ENCODE measurements at regions of chr21 and their contacts with region 1.

Region 1: GRCh38 chr21:28522014-28522799 is 470.5 kb downstream of the LTN1 start:
- DNase-seq: peak; percentile 79
- ATAC-seq: peak; percentile 90
- H3K4me3 ChIP-seq: no peak overlapping the region
- H3K27ac ChIP-seq: peak overlapping the region; percentile 54; the same call in 1 of the 2 replicates
- H3K4me1 ChIP-seq: peaks cover 2% of the 10 kb centered on the region
- H3K27me3 ChIP-seq: no peaks in the 10 kb centered on the region
- CTCF ChIP-seq: peak; percentile 71
- POLR2A ChIP-seq: no peak
- RAD21 ChIP-seq: peak; percentile 82

Region 2: GRCh38 chr21:28342212-28342810 is 179.9 kb before region 1 on chr21:
- CTCF ChIA-PET with region 1: interaction called, 3 read pairs
- POLR2A ChIA-PET with region 1: no interaction called
- dilution Hi-C with region 1: no loop called
- in situ Hi-C with region 1: loop called (anchors 10 kb)
- intact Hi-C with region 1: loop called (anchors 1 kb)
- DNase-seq: no peak
- ATAC-seq: no peak
- H3K4me3 ChIP-seq: no peak overlapping the region
- H3K27ac ChIP-seq: no peak overlapping the region
- H3K4me1 ChIP-seq: peaks cover 2% of the 10 kb centered on the region
- H3K27me3 ChIP-seq: no peaks in the 10 kb centered on the region
- CTCF ChIP-seq: no peak
- POLR2A ChIP-seq: no peak
- RAD21 ChIP-seq: no peak

Region 3: DNA sequence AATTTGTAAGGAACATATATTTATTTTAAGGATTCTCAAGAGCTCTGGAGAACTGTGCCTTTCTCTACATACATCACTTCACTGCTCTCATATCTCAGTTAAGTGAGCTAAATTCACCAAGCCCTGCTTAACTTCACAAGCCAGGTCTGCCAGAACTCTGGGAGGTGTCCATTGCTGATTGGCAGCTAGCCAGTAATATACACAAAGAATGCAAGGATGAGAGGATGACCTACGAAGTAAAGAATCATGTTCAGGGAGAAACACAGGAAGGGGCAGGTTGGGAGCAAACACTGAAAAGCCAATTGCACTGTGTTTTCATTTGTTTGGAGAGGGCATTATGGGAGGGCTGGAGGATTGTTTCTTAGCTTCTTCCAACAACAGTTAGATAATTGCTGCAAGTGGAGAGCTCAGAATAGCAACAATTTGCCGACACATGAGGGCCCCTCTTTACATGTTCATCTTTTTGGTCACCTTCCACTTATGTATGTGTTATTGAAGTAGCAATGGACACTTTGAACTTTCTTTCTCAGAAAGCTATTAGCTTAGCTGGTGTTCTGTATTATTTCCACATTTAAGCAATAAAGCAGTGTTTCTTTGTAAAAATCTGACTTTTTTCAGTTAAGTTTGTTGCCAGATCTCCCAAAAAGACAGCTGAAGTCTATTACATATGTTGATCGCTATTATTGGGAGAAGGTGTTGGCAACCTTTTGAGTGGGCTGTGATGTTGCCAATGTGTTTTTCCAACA is 215.6 kb after region 1 on chr21:
- CTCF ChIA-PET with region 1: no interaction called
- POLR2A ChIA-PET with region 1: no interaction called
- dilution Hi-C with region 1: no loop called
- in situ Hi-C with region 1: loop called (anchors 5 kb)
- intact Hi-C with region 1: no loop called
- DNase-seq: peak; percentile 59
- ATAC-seq: peak; percentile 25
- H3K4me3 ChIP-seq: no peak overlapping the region
- H3K27ac ChIP-seq: no peak overlapping the region
- H3K4me1 ChIP-seq: peaks cover 5% of the 10 kb centered on the region
- H3K27me3 ChIP-seq: no peaks in the 10 kb centered on the region
- CTCF ChIP-seq: no peak
- POLR2A ChIP-seq: no peak
- RAD21 ChIP-seq: no peak

Region 4: DNA sequence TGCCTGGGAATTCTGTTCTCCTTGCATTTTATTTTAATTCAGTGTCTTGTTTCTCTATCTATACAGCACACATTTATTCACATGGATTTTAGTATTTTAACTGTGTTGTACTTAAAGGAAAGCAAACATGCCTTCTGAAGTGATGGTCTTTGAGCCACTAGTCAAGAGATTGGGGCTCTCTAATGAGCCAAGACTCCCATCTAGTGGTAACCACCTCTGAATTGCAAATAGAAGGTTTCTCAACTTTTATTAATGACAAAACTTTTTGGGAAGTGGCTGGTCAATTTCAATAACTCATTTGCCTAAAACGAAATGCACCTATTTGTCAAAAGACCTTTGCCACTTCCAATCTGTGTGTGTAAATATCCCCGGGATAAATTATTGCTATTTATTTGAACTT is 270.8 kb after region 1 on chr21:
- CTCF ChIA-PET with region 1: no interaction called
- POLR2A ChIA-PET with region 1: no interaction called
- dilution Hi-C with region 1: no loop called
- in situ Hi-C with region 1: no loop called
- intact Hi-C with region 1: loop called (anchors 2 kb)
- DNase-seq: peak; percentile 73
- ATAC-seq: peak; percentile 85
- H3K4me3 ChIP-seq: no peak overlapping the region
- H3K27ac ChIP-seq: no peak overlapping the region
- H3K4me1 ChIP-seq: peaks cover 9% of the 10 kb centered on the region
- H3K27me3 ChIP-seq: no peaks in the 10 kb centered on the region
- CTCF ChIP-seq: peak; percentile 75
- POLR2A ChIP-seq: no peak
- RAD21 ChIP-seq: peak; percentile 85

Region 5: DNA sequence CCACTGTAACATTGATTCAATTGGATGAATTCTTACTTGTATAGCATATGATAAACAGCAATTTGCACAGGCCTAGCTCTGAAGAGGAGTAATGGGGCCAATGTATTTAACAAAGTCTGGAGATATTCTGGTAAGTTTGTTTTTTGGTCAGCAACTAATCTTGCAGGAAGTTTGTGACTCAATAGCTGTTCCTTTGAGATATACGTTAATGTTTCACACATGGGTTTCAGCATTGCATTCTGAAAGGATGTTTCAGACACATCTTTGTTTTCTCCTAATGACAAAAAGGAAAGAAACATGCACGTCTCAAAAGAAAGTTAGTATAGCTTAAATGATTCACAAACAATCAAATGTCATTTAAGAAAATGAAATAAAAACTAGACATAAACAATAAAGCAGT is 421.4 kb after region 1 on chr21:
- CTCF ChIA-PET with region 1: no interaction called
- POLR2A ChIA-PET with region 1: no interaction called
- dilution Hi-C with region 1: no loop called
- in situ Hi-C with region 1: no loop called
- intact Hi-C with region 1: loop called (anchors 2 kb)
- DNase-seq: peak; percentile 28
- ATAC-seq: no peak; the same call in 1 of the 2 replicates
- H3K4me3 ChIP-seq: no peak overlapping the region
- H3K27ac ChIP-seq: no peak overlapping the region
- H3K4me1 ChIP-seq: no peaks in the 10 kb centered on the region
- H3K27me3 ChIP-seq: no peaks in the 10 kb centered on the region
- CTCF ChIP-seq: no peak
- POLR2A ChIP-seq: no peak
- RAD21 ChIP-seq: no peak